GM12878 (cell line): ENCODE measurements at regions of chr20 and their contacts with region 1.

Region 1: DNA sequence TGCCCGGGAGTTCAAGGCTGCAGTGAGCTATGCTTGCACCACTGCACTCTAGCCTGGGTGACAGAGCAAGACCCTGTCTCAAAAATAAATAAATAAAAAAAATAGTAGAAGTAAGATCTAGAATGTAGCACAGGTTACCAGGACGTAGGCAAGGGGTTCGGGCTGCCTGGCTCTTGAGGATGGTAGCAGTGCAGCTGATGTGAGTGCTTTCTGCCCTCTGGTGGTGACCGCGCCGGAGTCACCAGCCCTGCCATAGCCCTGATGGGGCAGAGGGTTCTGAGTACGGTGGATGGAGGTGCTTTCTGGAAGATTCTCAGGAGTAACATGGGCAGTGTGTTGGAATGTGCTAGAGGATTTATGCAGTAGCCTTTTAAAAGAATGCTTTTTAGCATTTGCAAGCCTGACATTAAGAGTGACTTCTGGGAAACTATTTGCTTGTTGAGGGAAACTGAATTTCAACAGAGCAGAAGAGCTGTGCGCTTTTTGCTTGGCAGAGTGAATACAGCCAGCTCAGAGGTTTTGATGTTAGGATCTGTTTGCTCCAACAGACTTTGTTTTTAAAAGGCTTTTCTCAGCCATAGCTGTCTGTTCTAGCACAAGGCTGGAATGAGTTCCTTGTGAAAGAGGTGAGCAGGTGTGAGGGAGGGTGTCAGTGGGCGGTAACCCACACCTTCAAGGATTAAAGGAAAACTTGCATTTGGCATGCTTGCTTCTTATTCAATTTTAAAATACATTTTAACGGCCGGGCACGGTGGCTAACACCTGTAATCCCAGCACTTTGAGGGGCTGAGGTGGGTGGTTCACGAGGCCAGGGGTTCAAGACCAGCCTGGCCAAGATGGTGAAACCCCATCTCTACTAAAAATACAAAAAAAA is 65.9 kb downstream of the PTPN1 start:
- DNase-seq: no peak
- ATAC-seq: peak; percentile 96
- H3K4me3 ChIP-seq: no peak overlapping the region
- H3K27ac ChIP-seq: no peak overlapping the region
- H3K4me1 ChIP-seq: peaks cover 3% of the 10 kb centered on the region
- H3K27me3 ChIP-seq: no peaks in the 10 kb centered on the region
- CTCF ChIP-seq: peak; percentile 63 to 70 (median 67)
- EP300 ChIP-seq: no peak
- POLR2A ChIP-seq: no peak
- RAD21 ChIP-seq: peak; percentile 60

Region 2: DNA sequence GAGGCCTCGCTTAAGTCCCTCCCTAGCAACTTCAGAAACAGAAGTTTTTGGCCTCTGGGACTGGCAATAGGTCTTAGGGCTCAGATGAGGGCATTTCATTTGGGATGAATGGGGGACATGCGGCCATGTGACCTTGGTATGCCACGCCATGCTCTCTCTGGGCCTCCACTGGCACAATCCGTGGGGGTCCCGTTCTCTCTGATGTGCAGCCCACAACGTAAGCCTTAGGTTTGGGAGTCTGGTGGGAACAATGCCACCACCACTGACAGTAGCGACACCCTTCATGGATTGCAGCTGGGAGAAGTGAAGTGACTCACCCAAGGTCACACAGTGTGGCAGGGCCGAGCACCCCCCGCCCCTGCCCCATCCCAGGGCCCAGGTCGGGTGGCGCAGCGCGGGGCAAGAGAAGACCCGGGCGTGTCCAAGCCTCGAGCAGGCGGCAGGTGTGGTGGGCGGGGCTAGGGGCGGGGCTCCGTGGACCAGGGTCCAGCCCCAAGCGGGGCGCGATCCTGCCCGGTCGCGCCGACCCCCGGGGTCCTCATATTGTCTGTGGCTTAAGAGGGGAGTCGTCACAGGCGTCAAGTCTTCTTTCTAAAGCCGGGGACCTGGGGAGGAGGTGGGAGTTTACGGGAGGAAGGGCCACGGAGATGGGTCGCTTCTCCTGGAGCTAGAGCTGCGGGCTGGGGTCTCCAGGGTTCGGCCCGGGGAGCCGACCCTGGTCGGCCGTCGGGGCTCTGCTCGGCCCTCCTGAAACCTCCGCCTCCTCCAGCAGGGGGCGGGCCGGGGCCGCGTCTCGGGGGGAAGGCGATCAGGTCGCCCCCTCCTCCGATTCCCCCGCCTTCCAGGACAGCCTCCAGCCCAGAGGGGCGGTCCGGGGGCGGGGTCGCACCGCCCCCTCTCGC is 386.2 kb before region 1 on chr20:
- CTCF ChIA-PET with region 1: interaction called, 6 read pairs
- POLR2A ChIA-PET with region 1: no interaction called
- RAD21 ChIA-PET with region 1: no interaction called
- SMC1A ChIA-PET with region 1: interaction called, 3 read pairs
- in situ Hi-C with region 1: loop called (anchors 5 kb)
- intact Hi-C with region 1: loop called (anchors 2 kb)
- DNase-seq: no peak
- ATAC-seq: peak; percentile 67
- H3K4me3 ChIP-seq: peak overlapping the region; percentile 88
- H3K27ac ChIP-seq: no peak overlapping the region
- H3K4me1 ChIP-seq: peaks cover 7% of the 10 kb centered on the region
- H3K27me3 ChIP-seq: no peaks in the 10 kb centered on the region
- CTCF ChIP-seq: peak; percentile 41 to 76 (median 70)
- EP300 ChIP-seq: no peak
- POLR2A ChIP-seq: no peak
- RAD21 ChIP-seq: peak; percentile 81

Region 3: DNA sequence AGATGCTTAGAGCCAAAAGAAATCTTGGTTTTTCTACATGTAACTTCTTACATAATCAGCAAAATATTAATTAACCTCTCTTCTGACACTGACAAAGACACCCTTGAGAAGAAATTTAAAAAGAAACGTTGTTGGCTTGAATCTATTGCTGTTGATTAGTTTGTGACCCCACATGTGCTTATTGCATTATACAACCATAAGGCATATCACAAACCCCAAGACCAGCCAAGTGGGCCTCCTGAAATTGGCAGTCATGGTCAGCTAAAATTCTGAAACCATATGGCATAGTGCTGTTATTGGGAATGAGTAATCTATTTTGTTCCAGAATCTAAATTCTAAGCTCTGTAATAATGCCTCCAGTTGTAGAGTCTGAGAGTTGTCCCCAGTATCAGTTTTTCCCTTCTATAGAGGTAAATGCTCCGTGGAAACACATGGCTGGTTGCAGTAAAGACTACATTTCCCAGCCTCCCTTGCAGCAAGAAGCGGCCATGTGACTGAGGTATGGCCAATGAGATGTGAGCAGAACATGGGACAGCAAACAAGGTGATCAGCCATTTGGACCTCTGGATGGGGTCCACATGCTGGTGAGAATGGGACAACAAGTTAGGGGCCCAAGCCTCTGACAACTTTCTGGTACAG is 108.2 kb before region 1 on chr20:
- CTCF ChIA-PET with region 1: interaction called, 26 read pairs
- POLR2A ChIA-PET with region 1: no interaction called
- RAD21 ChIA-PET with region 1: interaction called, 14 read pairs
- SMC1A ChIA-PET with region 1: interaction called, 2,799 read pairs
- in situ Hi-C with region 1: loop called (anchors 5 kb)
- intact Hi-C with region 1: loop called (anchors 5 kb)
- DNase-seq: no peak
- ATAC-seq: peak; percentile 80
- H3K4me3 ChIP-seq: no peak overlapping the region
- H3K27ac ChIP-seq: no peak overlapping the region
- H3K4me1 ChIP-seq: peaks cover 3% of the 10 kb centered on the region
- H3K27me3 ChIP-seq: no peaks in the 10 kb centered on the region
- CTCF ChIP-seq: no peak
- EP300 ChIP-seq: no peak
- POLR2A ChIP-seq: no peak
- RAD21 ChIP-seq: no peak

Region 4: DNA sequence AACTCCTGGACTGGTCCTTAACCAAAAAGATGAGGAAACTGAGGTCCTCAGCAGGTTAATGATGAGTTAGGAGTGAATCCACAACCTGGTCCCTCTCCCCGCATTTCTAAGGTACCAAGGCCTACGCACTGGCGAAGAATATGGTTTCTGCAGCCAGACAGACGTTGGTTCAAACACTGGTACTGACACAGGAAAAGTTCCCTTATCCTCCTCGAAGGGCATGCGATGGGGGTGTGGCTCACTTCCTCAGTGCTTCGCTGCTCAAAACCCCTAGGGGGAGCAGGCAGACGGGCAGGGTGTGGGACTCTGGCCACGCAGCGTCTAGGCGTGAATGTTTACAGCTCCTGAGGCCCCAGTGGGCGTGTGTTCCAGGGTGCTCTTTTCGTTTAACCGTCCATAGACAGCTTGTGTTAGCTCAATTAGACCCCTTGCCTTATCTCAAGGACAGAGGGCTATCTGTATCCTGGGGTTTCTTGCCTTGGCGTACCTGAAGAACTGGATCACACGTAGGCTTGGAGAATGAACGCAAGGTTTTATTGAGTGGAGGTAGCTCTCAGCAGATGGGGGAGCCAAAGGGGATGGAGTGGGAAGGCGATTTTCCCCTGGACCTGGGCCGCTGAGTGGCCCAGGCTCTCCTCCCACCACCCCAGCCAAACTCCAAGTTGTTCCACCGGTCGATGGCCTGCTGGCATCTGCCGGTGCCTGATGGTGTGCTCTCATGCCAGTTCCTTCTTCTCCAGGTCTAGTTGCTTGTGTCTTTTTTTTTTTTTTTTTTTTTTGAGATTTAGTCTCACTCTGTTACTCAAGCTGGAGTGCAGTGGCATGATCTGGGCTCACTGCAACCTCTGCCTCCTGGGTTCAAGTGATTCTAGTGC is 97.7 kb before region 1 on chr20:
- CTCF ChIA-PET with region 1: interaction called, 26 read pairs
- POLR2A ChIA-PET with region 1: interaction called, 3 read pairs
- RAD21 ChIA-PET with region 1: interaction called, 7 read pairs
- SMC1A ChIA-PET with region 1: interaction called, 2,799 read pairs
- in situ Hi-C with region 1: loop called (anchors 5 kb)
- intact Hi-C with region 1: loop called (anchors 2 kb)
- DNase-seq: no peak
- ATAC-seq: peak; percentile 99
- H3K4me3 ChIP-seq: no peak overlapping the region
- H3K27ac ChIP-seq: no peak overlapping the region
- H3K4me1 ChIP-seq: peaks cover 21% of the 10 kb centered on the region
- H3K27me3 ChIP-seq: no peaks in the 10 kb centered on the region
- CTCF ChIP-seq: peak; percentile 60 to 87 (median 84)
- EP300 ChIP-seq: no peak
- POLR2A ChIP-seq: no peak
- RAD21 ChIP-seq: peak; percentile 79

Region 5: DNA sequence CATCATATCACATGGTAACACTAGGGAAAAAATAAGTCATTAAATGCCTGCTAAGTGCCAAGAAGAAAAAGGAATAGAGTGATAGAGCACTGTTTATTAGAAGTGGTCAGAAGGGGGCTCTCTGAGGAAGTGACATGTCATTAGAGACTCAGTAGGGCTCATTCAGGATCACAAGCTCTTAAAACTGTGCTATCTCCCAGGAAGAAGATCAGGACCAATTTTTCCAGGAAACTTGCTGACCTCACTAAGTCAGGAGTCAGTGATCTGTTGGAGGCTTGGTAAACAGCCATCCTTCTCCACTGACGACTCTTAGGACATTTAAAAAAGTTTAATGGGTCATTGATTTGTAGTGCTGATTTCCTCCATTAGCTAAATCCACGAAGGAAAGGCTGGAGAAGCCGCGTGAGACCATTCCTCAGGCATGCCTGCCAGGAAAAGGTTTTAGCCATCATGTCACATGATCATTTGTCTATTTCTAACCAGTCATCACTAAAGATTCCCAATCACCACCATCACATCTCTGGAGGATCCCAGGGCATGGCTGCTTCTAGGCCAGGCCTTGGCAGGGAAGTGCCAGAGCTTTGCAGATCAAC is 71.8 kb before region 1 on chr20:
- CTCF ChIA-PET with region 1: interaction called, 240 read pairs
- POLR2A ChIA-PET with region 1: interaction called, 3 read pairs
- RAD21 ChIA-PET with region 1: interaction called, 54 read pairs
- SMC1A ChIA-PET with region 1: interaction called, 2,799 read pairs
- in situ Hi-C with region 1: no loop called
- intact Hi-C with region 1: no loop called
- DNase-seq: no peak
- ATAC-seq: peak; percentile 64
- H3K4me3 ChIP-seq: no peak overlapping the region
- H3K27ac ChIP-seq: no peak overlapping the region
- H3K4me1 ChIP-seq: peaks cover 29% of the 10 kb centered on the region
- H3K27me3 ChIP-seq: no peaks in the 10 kb centered on the region
- CTCF ChIP-seq: peak; percentile 21 to 43 (median 21); a peak in 3 of 6 replicates
- EP300 ChIP-seq: no peak
- POLR2A ChIP-seq: no peak
- RAD21 ChIP-seq: peak; percentile 49; the same call in 1 of the 2 replicates

Region 6: GRCh38 chr20:50540620-50541605 is 35.2 kb before region 1 on chr20:
- CTCF ChIA-PET with region 1: interaction called, 12 read pairs
- POLR2A ChIA-PET with region 1: no interaction called
- RAD21 ChIA-PET with region 1: interaction called, 3 read pairs
- SMC1A ChIA-PET with region 1: interaction called, 2,799 read pairs
- in situ Hi-C with region 1: no loop called
- intact Hi-C with region 1: no loop called
- DNase-seq: no peak
- ATAC-seq: peak; percentile 18
- H3K4me3 ChIP-seq: peak overlapping the region; percentile 42
- H3K27ac ChIP-seq: peak overlapping the region; percentile 78
- H3K4me1 ChIP-seq: peaks cover 67% of the 10 kb centered on the region
- H3K27me3 ChIP-seq: no peaks in the 10 kb centered on the region
- CTCF ChIP-seq: no peak
- EP300 ChIP-seq: no peak
- POLR2A ChIP-seq: peak; percentile 28; the same call in 1 of the 2 replicates
- RAD21 ChIP-seq: no peak

Region 7: DNA sequence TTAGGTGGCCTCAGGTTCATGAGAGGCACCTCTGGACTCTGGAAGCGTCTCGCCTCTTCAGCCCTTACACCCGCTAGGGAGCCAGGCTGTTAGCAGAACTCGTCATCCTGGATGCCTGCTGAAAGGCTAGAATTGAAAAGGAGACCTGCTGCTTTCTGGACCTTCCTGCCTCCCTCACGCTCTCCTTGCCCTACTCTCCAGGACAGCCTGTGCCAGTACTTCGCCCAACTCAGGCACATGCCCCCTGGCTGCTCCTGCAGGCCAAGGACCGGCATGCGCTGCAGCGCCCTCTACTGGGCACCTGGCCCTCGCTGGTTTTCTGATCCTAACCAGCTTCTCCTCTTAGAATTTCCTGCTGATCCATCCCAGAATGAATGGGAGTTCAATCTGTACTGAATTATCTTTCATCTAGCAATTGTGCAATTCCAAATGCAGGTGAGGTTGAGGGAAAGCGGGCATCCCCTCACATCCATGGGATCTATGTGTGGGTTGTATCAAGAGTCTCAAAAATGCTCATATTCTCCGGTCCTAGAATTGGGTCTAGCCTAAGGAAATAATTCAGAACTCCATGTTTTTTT is 12.0 kb after region 1 on chr20:
- CTCF ChIA-PET with region 1: interaction called, 10 read pairs
- POLR2A ChIA-PET with region 1: no interaction called
- RAD21 ChIA-PET with region 1: no interaction called
- SMC1A ChIA-PET with region 1: interaction called, 3 read pairs
- in situ Hi-C with region 1: no loop called
- intact Hi-C with region 1: no loop called
- DNase-seq: no peak
- ATAC-seq: peak; percentile 84
- H3K4me3 ChIP-seq: no peak overlapping the region
- H3K27ac ChIP-seq: no peak overlapping the region
- H3K4me1 ChIP-seq: no peaks in the 10 kb centered on the region
- H3K27me3 ChIP-seq: no peaks in the 10 kb centered on the region
- CTCF ChIP-seq: peak; percentile 86 to 97 (median 93)
- EP300 ChIP-seq: no peak
- POLR2A ChIP-seq: no peak; the same call in none of the 2 replicates
- RAD21 ChIP-seq: peak; percentile 55